Activated CD8-positive, alpha-beta memory T cell treated with anti-CD3 and anti-CD28 coated beads, Interleukin-2, amount 10 ng/mL, durations not matched to agents 7 days and 5 days (primary cell): ENCODE measurements at regions of chr15 and their contacts with region 1.

Region 1: GRCh38 chr15:60585743-60586708 is 107.1 kb upstream of the ICE2 start:
- DNase-seq: peak; percentile 79
- ATAC-seq: peak; percentile 22
- H3K4me3 Mint-ChIP-seq: peak overlapping the region; percentile 57
- H3K27ac Mint-ChIP-seq: peak overlapping the region; percentile 89
- H3K4me1 Mint-ChIP-seq: peaks cover 84% of the 10 kb centered on the region
- H3K27me3 Mint-ChIP-seq: peaks cover 2% of the 10 kb centered on the region

Region 2: DNA sequence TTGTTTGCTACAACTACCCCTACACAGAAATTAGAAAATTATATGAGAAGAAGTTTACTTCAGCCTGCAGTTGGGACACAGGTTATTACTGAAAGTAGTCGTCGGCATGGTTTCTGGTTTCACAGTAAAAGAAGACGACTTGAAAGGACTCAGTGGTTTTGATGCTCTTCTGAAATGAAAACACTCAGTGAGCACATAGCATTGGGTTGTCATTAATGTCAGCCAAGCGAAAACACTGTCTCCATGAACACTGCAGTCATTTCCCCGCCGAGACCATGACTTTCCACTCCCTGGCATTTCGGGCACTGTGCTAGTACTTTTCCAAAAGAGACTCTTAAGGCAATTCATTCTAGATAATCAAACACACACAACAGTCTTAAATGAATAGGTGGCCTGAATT is 37.9 kb before region 1 on chr15:
- CTCF ChIA-PET with region 1: interaction called, 67 read pairs
- DNase-seq: peak; percentile 75
- ATAC-seq: peak; percentile 63
- H3K4me3 Mint-ChIP-seq: peak overlapping the region; percentile 70
- H3K27ac Mint-ChIP-seq: peak overlapping the region; percentile 96
- H3K4me1 Mint-ChIP-seq: peaks cover 96% of the 10 kb centered on the region
- H3K27me3 Mint-ChIP-seq: no peaks in the 10 kb centered on the region

Region 3: DNA sequence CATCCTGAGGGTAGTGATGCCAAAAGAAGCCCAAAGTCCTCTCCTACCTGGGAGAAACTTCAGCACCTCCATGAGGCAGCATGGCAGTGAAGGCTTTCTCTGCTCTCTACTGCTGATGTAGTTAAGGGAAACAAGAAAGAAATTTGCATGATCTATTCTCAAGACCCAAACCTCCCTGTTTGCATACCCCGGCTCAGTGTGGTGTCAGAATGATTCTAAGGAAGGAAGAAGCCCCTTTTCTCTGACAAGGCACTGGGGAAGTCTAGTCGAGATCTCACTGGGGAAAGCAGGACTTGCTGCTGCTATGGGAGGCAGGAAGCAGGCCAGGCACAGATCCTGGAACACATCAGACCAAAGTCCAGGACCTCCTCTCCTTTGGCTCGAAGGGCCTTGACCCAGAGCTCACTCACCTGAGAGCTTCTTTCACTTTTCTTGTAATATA is 17.7 kb before region 1 on chr15:
- CTCF ChIA-PET with region 1: interaction called, 47 read pairs
- DNase-seq: no peak
- ATAC-seq: no peak
- H3K4me3 Mint-ChIP-seq: no peak overlapping the region
- H3K27ac Mint-ChIP-seq: peak overlapping the region; percentile 80
- H3K4me1 Mint-ChIP-seq: peaks cover 90% of the 10 kb centered on the region
- H3K27me3 Mint-ChIP-seq: no peaks in the 10 kb centered on the region

Region 4: GRCh38 chr15:60932051-60932915 is 346.3 kb after region 1 on chr15:
- CTCF ChIA-PET with region 1: interaction called, 13 read pairs
- DNase-seq: peak; percentile 75
- ATAC-seq: peak; percentile 93
- H3K4me3 Mint-ChIP-seq: no peak overlapping the region
- H3K27ac Mint-ChIP-seq: no peak overlapping the region
- H3K4me1 Mint-ChIP-seq: peaks cover 14% of the 10 kb centered on the region
- H3K27me3 Mint-ChIP-seq: peaks cover 42% of the 10 kb centered on the region